ENCODE measurements at regions of chrX and their contacts with region 1.

Region 1: GRCh38 chrX:41457613-41458192 is 10.6 kb downstream of the NYX start:
- DNase-seq: no peak
- H3K4me3 ChIP-seq: no peak overlapping the region
- H3K27ac ChIP-seq: no peak overlapping the region
- H3K4me1 ChIP-seq: no peaks in the 10 kb centered on the region
- H3K27me3 ChIP-seq: peaks cover 3% of the 10 kb centered on the region
- CTCF ChIP-seq: peak; percentile 13 to 21

Region 2: DNA sequence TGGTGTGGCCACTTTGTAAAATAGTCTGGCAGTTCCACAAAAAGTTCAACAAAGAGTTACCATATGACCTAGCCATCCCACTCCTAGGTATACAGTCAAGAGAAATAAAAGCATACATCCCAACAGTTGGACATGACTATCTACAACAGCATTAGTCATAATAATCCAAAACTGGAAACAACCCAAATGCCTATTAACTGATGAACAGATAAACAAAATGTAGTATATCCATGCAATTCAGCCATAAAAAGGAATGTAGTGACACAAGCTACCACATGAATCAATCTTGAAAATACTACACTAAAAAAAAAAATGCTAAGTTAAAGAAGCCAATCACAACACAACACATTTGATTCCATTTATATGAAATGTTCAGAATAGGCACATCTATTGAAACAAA is 738.5 kb before region 1 on chrX:
- CTCF ChIA-PET with region 1: interaction called, 10 read pairs
- dilution Hi-C with region 1: no loop called
- in situ Hi-C with region 1: no loop called
- intact Hi-C with region 1: no loop called
- DNase-seq: peak; percentile 72
- H3K4me3 ChIP-seq: no peak overlapping the region
- H3K27ac ChIP-seq: no peak overlapping the region
- H3K4me1 ChIP-seq: peaks cover 3% of the 10 kb centered on the region
- H3K27me3 ChIP-seq: no peaks in the 10 kb centered on the region
- CTCF ChIP-seq: no peak

Region 3: DNA sequence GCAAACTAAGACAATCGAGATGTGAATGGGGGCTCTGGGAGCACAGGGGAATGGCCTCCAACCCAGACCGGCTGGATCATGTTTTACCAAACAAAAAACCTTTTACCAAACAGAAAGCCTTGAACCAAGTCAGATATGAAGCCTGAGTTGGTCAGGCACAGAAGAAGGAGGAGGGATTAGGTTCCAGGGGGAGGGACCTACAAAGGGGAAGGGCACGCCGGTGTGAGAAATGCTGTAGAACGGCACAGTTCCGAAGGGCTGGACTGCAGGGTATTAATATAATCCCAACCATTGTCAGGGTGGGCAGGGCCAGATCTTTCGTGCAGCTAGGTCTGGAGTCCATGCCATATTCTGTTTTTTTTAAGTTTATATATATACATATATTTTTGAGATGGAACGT is 63.4 kb before region 1 on chrX:
- CTCF ChIA-PET with region 1: no interaction called
- dilution Hi-C with region 1: no loop called
- in situ Hi-C with region 1: no loop called
- intact Hi-C with region 1: no loop called
- DNase-seq: no peak
- H3K4me3 ChIP-seq: no peak overlapping the region
- H3K27ac ChIP-seq: no peak overlapping the region
- H3K4me1 ChIP-seq: peaks cover 13% of the 10 kb centered on the region
- H3K27me3 ChIP-seq: peaks cover 2% of the 10 kb centered on the region
- CTCF ChIP-seq: no peak

Region 4: GRCh38 chrX:41406211-41406610 is 51.5 kb before region 1 on chrX:
- CTCF ChIA-PET with region 1: no interaction called
- dilution Hi-C with region 1: no loop called
- in situ Hi-C with region 1: no loop called
- intact Hi-C with region 1: no loop called
- DNase-seq: peak; percentile 61
- H3K4me3 ChIP-seq: no peak overlapping the region
- H3K27ac ChIP-seq: no peak overlapping the region
- H3K4me1 ChIP-seq: no peaks in the 10 kb centered on the region
- H3K27me3 ChIP-seq: no peaks in the 10 kb centered on the region
- CTCF ChIP-seq: no peak

Measured in mammary epithelial cell (primary cell).